T-cell (primary cell): ENCODE measurements at regions of chr17 and their contacts with region 1.

Region 1: GRCh38 chr17:81582341-81582740 is 30.2 kb upstream of the FAAP100 start:
- DNase-seq: no peak
- ATAC-seq: no peak
- H3K4me3 ChIP-seq: no peak overlapping the region
- H3K4me3 Mint-ChIP-seq: no peak overlapping the region
- H3K27ac ChIP-seq: no peak overlapping the region
- H3K27ac Mint-ChIP-seq: no peak overlapping the region
- H3K4me1 ChIP-seq: no peaks in the 10 kb centered on the region
- H3K4me1 Mint-ChIP-seq: peaks cover 0 to 20% (median 8%) of the 10 kb centered on the region in 3 donors
- H3K27me3 ChIP-seq: no peaks in the 10 kb centered on the region
- H3K27me3 Mint-ChIP-seq: no peaks in the 10 kb centered on the region

Region 2: GRCh38 chr17:81601525-81602120 is 19.3 kb after region 1 on chr17:
- CTCF ChIA-PET with region 1: interaction called in 1 of 2 experiments, 5 read pairs
- POLR2A ChIA-PET with region 1: interaction called in 1 of 2 experiments, 15 read pairs
- DNase-seq: peak in 30 of 35 experiments; percentile 4 to 78 (median 25)
- ATAC-seq: peak; percentile 84 to 93 (median 88)
- H3K4me3 ChIP-seq: no peak overlapping the region
- H3K4me3 Mint-ChIP-seq: no peak overlapping the region
- H3K27ac ChIP-seq: no peak overlapping the region
- H3K27ac Mint-ChIP-seq: no peak overlapping the region
- H3K4me1 ChIP-seq: no peaks in the 10 kb centered on the region
- H3K4me1 Mint-ChIP-seq: peaks cover 4 to 12% (median 7%) of the 10 kb centered on the region in 3 donors
- H3K27me3 ChIP-seq: no peaks in the 10 kb centered on the region
- H3K27me3 Mint-ChIP-seq: no peaks in the 10 kb centered on the region